ENCODE measurements at regions of chr20 and their contacts with region 1.

Region 1: DNA sequence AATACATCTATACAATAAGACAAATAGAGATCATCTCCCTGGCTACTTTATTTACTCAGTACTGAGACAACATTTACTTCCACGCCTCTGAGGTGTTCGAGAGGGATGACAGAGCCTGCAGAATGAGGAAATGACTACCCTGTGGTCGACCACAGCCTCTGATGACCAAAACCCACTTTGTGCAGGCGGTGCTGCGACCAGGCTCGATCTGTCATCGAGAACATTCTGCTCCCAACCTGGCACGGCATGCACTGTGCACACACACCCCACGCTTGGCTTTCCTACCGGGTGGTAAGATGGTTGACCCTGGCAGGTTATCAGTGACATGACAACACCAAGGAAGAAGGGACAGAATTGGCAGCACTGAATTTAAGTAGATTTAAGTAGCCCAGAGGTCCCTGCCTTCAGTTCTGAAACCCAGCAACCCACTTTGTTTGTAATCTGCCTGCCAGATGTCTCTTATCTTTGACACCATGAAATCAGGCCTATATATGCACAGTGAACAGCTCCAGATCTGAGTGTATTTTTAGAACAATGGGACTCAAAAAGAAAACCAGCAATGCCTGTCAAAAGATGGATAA is 42.6 kb downstream of the TTI1 start:
- DNase-seq: peak in 1 of 2 donors; percentile 72
- H3K4me3 ChIP-seq: no peak overlapping the region
- H3K27ac ChIP-seq: no peak overlapping the region
- H3K4me1 ChIP-seq: peaks cover 7 to 25% of the 10 kb centered on the region in 2 donors
- H3K27me3 ChIP-seq: no peaks in the 10 kb centered on the region
- CTCF ChIP-seq: no peak

Region 2: GRCh38 chr20:37564388-37565133 is 426.1 kb before region 1 on chr20:
- intact Hi-C with region 1: loop called (anchors 5 kb)
- DNase-seq: peak in 1 of 2 donors; percentile 51
- H3K4me3 ChIP-seq: no peak overlapping the region
- H3K27ac ChIP-seq: no peak overlapping the region
- H3K4me1 ChIP-seq: no peaks in the 10 kb centered on the region
- H3K27me3 ChIP-seq: no peaks in the 10 kb centered on the region
- CTCF ChIP-seq: peak; percentile 64 to 92 (median 71)

Region 3: GRCh38 chr20:38173237-38174156 is 182.8 kb after region 1 on chr20:
- intact Hi-C with region 1: no loop called
- DNase-seq: peak in 1 of 2 donors; percentile 91
- H3K4me3 ChIP-seq: no peak overlapping the region
- H3K27ac ChIP-seq: peak overlapping the region in 1 of 2 donors; percentile 26
- H3K4me1 ChIP-seq: peaks cover 9 to 12% of the 10 kb centered on the region in 2 donors
- H3K27me3 ChIP-seq: no peaks in the 10 kb centered on the region
- CTCF ChIP-seq: no peak